Activated B cell treated with CpG ODN at 0.5 μM for 24 hours (primary cell): ENCODE measurements at regions of chr20 and their contacts with region 1.

Region 1: GRCh38 chr20:45415774-45416637 is at the start of gene PIGT:
- DNase-seq: peak; percentile 75
- ATAC-seq: peak; percentile 86
- H3K4me3 Mint-ChIP-seq: peak within 1 kb of the TSS; percentile 96
- H3K27ac Mint-ChIP-seq: peak within 1 kb of the TSS; percentile 98
- H3K4me1 Mint-ChIP-seq: peaks cover 58% of the 10 kb centered on the region
- H3K27me3 Mint-ChIP-seq: no peaks in the 10 kb centered on the region
- CTCF ChIP-seq: no peak
- total RNA-seq, gene PIGT: 65.8 and 74.5 TPM in 2 replicates

Region 2: GRCh38 chr20:45368221-45368980 is 47.6 kb before region 1 on chr20:
- CTCF ChIA-PET with region 1: interaction called, 16 read pairs
- POLR2A ChIA-PET with region 1: interaction called, 41 read pairs
- intact Hi-C with region 1: loop called (anchors 1 kb)
- DNase-seq: peak; percentile 52
- ATAC-seq: peak; percentile 82
- H3K4me3 Mint-ChIP-seq: peak overlapping the region; percentile 77
- H3K27ac Mint-ChIP-seq: peak overlapping the region; percentile 86
- H3K4me1 Mint-ChIP-seq: peaks cover 91% of the 10 kb centered on the region
- H3K27me3 Mint-ChIP-seq: no peaks in the 10 kb centered on the region
- CTCF ChIP-seq: no peak

Region 3: GRCh38 chr20:45735552-45735951 is 319.5 kb after region 1 on chr20:
- CTCF ChIA-PET with region 1: no interaction called
- POLR2A ChIA-PET with region 1: no interaction called
- intact Hi-C with region 1: no loop called
- DNase-seq: no peak
- ATAC-seq: no peak
- H3K4me3 Mint-ChIP-seq: no peak overlapping the region
- H3K27ac Mint-ChIP-seq: no peak overlapping the region
- H3K4me1 Mint-ChIP-seq: no peaks in the 10 kb centered on the region
- H3K27me3 Mint-ChIP-seq: peaks cover 17% of the 10 kb centered on the region
- CTCF ChIP-seq: no peak